Naive thymus-derived CD4-positive, alpha-beta T cell (primary cell): ENCODE measurements at regions of chr20 and their contacts with region 1.

Region 1: DNA sequence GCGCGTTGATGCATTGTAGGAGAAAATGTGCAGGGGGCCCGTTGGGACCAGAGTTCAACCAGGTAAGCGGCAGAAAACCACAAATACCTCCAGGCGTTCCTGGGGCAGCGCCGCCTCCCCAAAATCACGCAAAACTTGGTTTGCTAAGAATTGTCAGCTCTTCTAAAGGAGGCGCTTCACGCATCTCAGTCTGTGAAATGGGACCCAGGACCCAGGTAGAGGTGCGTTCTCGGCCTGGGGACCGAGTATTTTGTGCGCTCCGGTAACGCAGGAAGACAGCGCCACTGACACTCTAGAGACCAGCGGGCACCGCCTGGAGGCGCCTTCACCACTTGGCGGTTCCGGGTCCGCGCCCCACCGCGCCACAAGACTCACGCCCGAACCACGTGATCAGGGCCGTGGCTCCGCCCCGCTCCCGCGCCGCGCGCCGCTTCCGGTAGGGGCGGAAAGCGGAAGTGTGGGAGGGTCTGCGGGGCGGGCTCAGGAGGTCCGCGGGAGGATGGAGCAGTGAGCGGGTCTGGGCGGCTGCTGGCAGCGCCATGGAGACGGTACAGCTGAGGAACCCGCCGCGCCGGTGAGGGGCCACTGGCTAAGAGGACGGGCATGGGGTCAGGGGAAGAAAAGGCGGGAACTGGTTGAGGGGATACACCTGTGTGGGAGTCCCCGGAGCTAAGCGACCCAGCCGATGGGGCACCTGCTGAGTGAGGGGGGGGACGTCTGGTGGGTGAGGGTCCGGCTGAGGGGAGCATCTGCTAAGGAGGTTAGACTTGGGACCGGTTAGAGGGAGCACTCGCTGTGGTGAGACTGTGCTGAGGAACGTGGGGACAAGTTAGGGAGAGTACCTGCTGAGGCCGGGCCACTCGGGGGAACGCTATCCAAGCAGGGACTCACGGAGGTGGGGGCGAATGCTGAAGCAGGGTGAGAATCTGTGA is at the start of gene STK4:
- DNase-seq: peak; percentile 93 to 98 (median 96)
- ATAC-seq: peak; percentile 93
- H3K4me3 ChIP-seq: peak within 1 kb of the TSS; percentile 75
- H3K4me3 Mint-ChIP-seq: peak within 1 kb of the TSS; percentile 93 to 100 (median 95)
- H3K27ac ChIP-seq: peak within 1 kb of the TSS; percentile 91
- H3K27ac Mint-ChIP-seq: peak within 1 kb of the TSS; percentile 80 to 98 (median 90)
- H3K4me1 ChIP-seq: peaks cover 16 to 17% of the 10 kb centered on the region in 2 donors
- H3K4me1 Mint-ChIP-seq: peaks cover 32 to 60% (median 55%) of the 10 kb centered on the region in 7 donors
- H3K27me3 ChIP-seq: no peaks in the 10 kb centered on the region
- H3K27me3 Mint-ChIP-seq: no peaks in the 10 kb centered on the region
- total RNA-seq, gene STK4: 207 to 383 (median 267) TPM

Region 2: DNA sequence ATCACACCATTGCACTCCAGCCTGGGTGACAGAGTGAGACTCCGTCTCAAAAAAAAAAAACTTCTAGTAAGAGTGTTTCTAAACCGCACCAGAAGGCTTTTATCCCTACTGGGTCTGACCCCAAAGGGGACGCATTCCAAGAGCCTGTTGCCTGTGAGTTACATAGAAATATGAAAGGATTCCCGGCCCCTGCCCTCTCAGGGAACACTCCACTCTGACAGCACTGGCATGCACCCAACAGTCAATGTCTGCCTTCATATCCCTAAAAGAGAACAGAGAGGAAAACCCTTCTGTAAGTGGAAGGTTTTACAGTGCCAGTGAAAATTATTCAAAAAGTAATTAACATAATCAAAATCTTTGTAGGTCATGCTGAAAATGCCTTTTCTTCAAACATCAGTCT is 1659.5 kb before region 1 on chr20:
- CTCF ChIA-PET with region 1: no interaction called
- POLR2A ChIA-PET with region 1: no interaction called
- intact Hi-C with region 1: no loop called
- DNase-seq: no peak
- ATAC-seq: no peak
- H3K4me3 ChIP-seq: no peak overlapping the region
- H3K4me3 Mint-ChIP-seq: no peak overlapping the region
- H3K27ac ChIP-seq: no peak overlapping the region
- H3K27ac Mint-ChIP-seq: no peak overlapping the region
- H3K4me1 ChIP-seq: no peaks in the 10 kb centered on the region
- H3K4me1 Mint-ChIP-seq: no peaks in the 10 kb centered on the region
- H3K27me3 ChIP-seq: no peaks in the 10 kb centered on the region
- H3K27me3 Mint-ChIP-seq: peaks cover 0 to 20% (median 15%) of the 10 kb centered on the region in 5 donors

Region 3: GRCh38 chr20:44642203-44643153 is 323.8 kb before region 1 on chr20:
- CTCF ChIA-PET with region 1: no interaction called
- POLR2A ChIA-PET with region 1: no interaction called
- intact Hi-C with region 1: loop called in 1 of 2 experiments (anchors 10 kb)
- DNase-seq: peak in 8 of 9 donors; percentile 28 to 54 (median 41)
- ATAC-seq: peak; percentile 33
- H3K4me3 ChIP-seq: peak overlapping the region; percentile 47
- H3K4me3 Mint-ChIP-seq: peak overlapping the region; percentile 63 to 96 (median 76)
- H3K27ac ChIP-seq: peak overlapping the region; percentile 76
- H3K27ac Mint-ChIP-seq: peak overlapping the region; percentile 90 to 98 (median 96)
- H3K4me1 ChIP-seq: peaks cover 53 to 70% of the 10 kb centered on the region in 2 donors
- H3K4me1 Mint-ChIP-seq: peaks cover 55 to 82% (median 70%) of the 10 kb centered on the region in 7 donors
- H3K27me3 ChIP-seq: no peaks in the 10 kb centered on the region
- H3K27me3 Mint-ChIP-seq: no peaks in the 10 kb centered on the region

Region 4: DNA sequence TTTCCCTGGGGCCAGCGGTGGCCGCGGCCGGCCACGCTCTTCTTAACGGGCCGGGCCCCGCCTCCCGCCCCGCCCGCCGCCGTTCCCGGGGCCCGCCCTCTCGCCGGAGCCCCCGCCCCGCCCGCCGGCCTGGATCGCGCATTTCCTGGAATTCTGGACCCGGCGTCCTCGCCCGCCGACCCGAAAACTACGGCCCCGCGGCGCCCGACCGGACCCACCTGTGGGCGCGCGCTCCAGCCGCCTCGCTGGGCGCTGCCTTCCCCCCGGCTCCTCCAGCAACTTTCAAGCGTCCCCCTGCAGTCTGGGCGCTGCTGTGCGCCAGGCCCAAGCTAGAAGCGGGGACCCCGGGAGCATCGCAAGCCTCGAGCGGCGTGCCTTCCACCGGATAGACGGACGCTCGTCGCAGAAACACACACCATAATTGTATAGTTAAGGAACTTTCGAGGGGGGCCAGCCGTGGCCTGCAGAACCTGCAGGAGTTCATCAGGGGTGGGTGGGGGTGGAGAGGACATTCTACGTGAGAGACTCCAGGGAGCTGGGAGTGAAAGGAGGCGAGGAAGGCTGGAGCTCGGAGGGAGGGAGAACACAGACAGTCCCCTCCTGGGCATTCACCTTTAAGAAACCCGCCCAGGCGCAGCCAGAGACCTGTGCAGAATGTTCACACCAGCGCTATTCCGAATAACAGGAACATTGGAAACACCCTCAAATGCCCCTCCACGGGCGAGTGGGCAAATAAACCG is 314.4 kb before region 1 on chr20 and contains the start of gene ADA:
- CTCF ChIA-PET with region 1: no interaction called
- POLR2A ChIA-PET with region 1: interaction called, 3 read pairs
- intact Hi-C with region 1: loop called (anchors 5 to 10 kb)
- DNase-seq: peak; percentile 26 to 70 (median 48)
- ATAC-seq: peak; percentile 70
- H3K4me3 ChIP-seq: peak within 1 kb of the TSS; percentile 73
- H3K4me3 Mint-ChIP-seq: peak within 1 kb of the TSS; percentile 81 to 96 (median 94)
- H3K27ac ChIP-seq: peak within 1 kb of the TSS; percentile 73
- H3K27ac Mint-ChIP-seq: peak within 1 kb of the TSS; percentile 88 to 98 (median 95)
- H3K4me1 ChIP-seq: peaks cover 38 to 43% of the 10 kb centered on the region in 2 donors
- H3K4me1 Mint-ChIP-seq: peaks cover 40 to 57% (median 55%) of the 10 kb centered on the region in 7 donors
- H3K27me3 ChIP-seq: no peaks in the 10 kb centered on the region
- H3K27me3 Mint-ChIP-seq: no peaks in the 10 kb centered on the region
- total RNA-seq, gene ADA: 26.1 to 103 (median 28.2) TPM

Region 5: GRCh38 chr20:44909872-44910689 is 56.2 kb before region 1 on chr20 and contains the start of gene PABPC1L:
- CTCF ChIA-PET with region 1: no interaction called
- POLR2A ChIA-PET with region 1: no interaction called
- intact Hi-C with region 1: loop called (anchors 1 to 2 kb)
- DNase-seq: peak; percentile 58 to 86 (median 71)
- ATAC-seq: peak; percentile 97
- H3K4me3 ChIP-seq: peak within 1 kb of the TSS; percentile 69
- H3K4me3 Mint-ChIP-seq: peak within 1 kb of the TSS; percentile 75 to 89 (median 85)
- H3K27ac ChIP-seq: peak within 1 kb of the TSS; percentile 53
- H3K27ac Mint-ChIP-seq: peak within 1 kb of the TSS; percentile 46 to 83 (median 78)
- H3K4me1 ChIP-seq: peaks cover 6 to 17% of the 10 kb centered on the region in 2 donors
- H3K4me1 Mint-ChIP-seq: peaks cover 12 to 47% (median 38%) of the 10 kb centered on the region in 7 donors
- H3K27me3 ChIP-seq: no peaks in the 10 kb centered on the region
- H3K27me3 Mint-ChIP-seq: no peaks in the 10 kb centered on the region
- total RNA-seq, gene PABPC1L: 34.0 to 71.7 (median 59.0) TPM

Region 6: GRCh38 chr20:44979090-44979621 is 12.9 kb after region 1 on chr20:
- CTCF ChIA-PET with region 1: interaction called, 28 read pairs
- POLR2A ChIA-PET with region 1: interaction called, 190 read pairs
- intact Hi-C with region 1: loop called (anchors 1 kb)
- DNase-seq: peak in 8 of 9 donors; percentile 60 to 93 (median 86)
- ATAC-seq: peak; percentile 93
- H3K4me3 ChIP-seq: peak overlapping the region; percentile 40
- H3K4me3 Mint-ChIP-seq: peak overlapping the region; percentile 74 to 90 (median 79)
- H3K27ac ChIP-seq: peak overlapping the region; percentile 98
- H3K27ac Mint-ChIP-seq: peak overlapping the region; percentile 86 to 98 (median 97)
- H3K4me1 ChIP-seq: peaks cover 64 to 70% of the 10 kb centered on the region in 2 donors
- H3K4me1 Mint-ChIP-seq: peaks cover 71 to 96% (median 90%) of the 10 kb centered on the region in 7 donors
- H3K27me3 ChIP-seq: no peaks in the 10 kb centered on the region
- H3K27me3 Mint-ChIP-seq: no peaks in the 10 kb centered on the region

Region 7: GRCh38 chr20:44990425-44990824 is 24.1 kb after region 1 on chr20:
- CTCF ChIA-PET with region 1: interaction called, 5 read pairs
- POLR2A ChIA-PET with region 1: interaction called, 15 read pairs
- intact Hi-C with region 1: loop called (anchors 1 kb)
- DNase-seq: peak in 1 of 9 donors; percentile 56
- ATAC-seq: peak; percentile 55
- H3K4me3 ChIP-seq: peak overlapping the region; percentile 42
- H3K4me3 Mint-ChIP-seq: peak overlapping the region; percentile 77 to 95 (median 88)
- H3K27ac ChIP-seq: peak overlapping the region; percentile 76
- H3K27ac Mint-ChIP-seq: peak overlapping the region; percentile 72 to 96 (median 92)
- H3K4me1 ChIP-seq: peaks cover 35 to 66% of the 10 kb centered on the region in 2 donors
- H3K4me1 Mint-ChIP-seq: peaks cover 57 to 97% (median 80%) of the 10 kb centered on the region in 7 donors
- H3K27me3 ChIP-seq: no peaks in the 10 kb centered on the region
- H3K27me3 Mint-ChIP-seq: no peaks in the 10 kb centered on the region

Region 8: DNA sequence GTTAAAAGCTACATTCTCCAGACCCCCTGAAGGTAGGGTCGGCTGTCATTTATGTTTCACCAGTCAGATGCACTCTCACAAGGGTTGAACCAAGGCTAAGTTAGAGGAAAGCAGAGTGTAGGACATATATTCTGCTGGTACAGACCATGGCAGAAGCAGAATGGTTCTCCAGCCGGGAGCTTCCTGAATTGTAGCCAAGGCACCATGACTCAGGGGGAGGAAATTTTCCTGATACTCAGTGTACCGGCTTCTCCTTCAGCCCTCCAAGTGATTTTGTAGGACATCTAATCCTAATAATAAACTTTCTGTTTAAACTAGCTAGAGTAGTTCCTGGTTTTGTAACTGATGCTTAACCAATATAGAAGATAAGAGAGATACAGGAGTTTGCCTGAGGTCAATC is 302.2 kb after region 1 on chr20:
- CTCF ChIA-PET with region 1: no interaction called
- POLR2A ChIA-PET with region 1: no interaction called
- intact Hi-C with region 1: no loop called
- DNase-seq: no peak
- ATAC-seq: no peak
- H3K4me3 ChIP-seq: no peak overlapping the region
- H3K4me3 Mint-ChIP-seq: no peak overlapping the region
- H3K27ac ChIP-seq: no peak overlapping the region
- H3K27ac Mint-ChIP-seq: no peak overlapping the region
- H3K4me1 ChIP-seq: no peaks in the 10 kb centered on the region
- H3K4me1 Mint-ChIP-seq: no peaks in the 10 kb centered on the region
- H3K27me3 ChIP-seq: no peaks in the 10 kb centered on the region
- H3K27me3 Mint-ChIP-seq: peaks cover 25 to 64% (median 41%) of the 10 kb centered on the region in 5 donors

Region 9: DNA sequence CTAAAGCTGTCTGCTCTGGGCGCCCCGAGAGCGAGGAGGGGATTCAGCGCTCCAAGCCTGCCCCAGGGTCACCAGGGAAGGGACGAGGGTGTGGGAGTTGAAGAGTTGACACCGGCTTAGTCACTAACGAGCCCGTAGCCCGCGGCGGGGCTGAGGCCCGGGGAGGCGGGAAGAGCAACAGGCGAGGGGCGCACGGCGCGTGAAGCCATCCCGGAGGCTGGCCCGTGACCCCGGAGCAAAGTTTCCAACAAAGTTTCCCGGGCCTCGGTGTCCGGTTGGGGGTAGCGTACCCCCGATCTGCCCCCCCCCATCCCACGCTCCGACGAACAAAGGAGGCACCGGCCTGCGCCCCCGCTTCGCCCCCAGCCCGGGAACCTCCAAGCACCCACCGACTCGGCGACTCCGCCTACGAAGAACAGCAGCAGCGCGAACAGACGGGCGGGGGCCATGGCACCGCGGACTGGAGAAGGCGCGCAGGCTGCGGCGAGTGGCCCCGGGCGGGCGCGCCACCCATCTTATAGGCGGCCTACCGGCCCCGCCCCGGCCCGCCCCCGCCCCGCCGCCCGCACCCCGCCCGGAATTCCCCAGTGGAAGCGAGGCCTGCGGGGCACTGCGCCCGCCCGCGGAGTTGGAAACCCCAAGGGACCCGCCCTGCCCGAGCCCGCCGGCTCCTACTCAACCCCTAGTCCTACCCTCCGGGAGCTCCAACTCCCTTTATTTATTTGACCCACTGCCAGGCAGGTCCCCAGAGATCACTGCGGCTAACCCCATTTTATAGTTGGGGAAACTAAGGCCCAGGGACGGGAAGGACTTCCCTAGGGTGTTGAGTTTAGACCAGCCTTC is 381.9 kb after region 1 on chr20 and contains the start of gene SDC4:
- CTCF ChIA-PET with region 1: no interaction called
- POLR2A ChIA-PET with region 1: no interaction called
- intact Hi-C with region 1: no loop called
- DNase-seq: peak in 3 of 9 donors; percentile 13 to 85 (median 42)
- ATAC-seq: peak; percentile 87
- H3K4me3 ChIP-seq: peak within 1 kb of the TSS; percentile 54
- H3K4me3 Mint-ChIP-seq: peak within 1 kb of the TSS; percentile 45 to 95 (median 74)
- H3K27ac ChIP-seq: no peak within 1 kb of the TSS
- H3K27ac Mint-ChIP-seq: peak within 1 kb of the TSS in 1 of 9 donors; percentile 83
- H3K4me1 ChIP-seq: peaks cover 4% of the 10 kb centered on the region in 2 donors
- H3K4me1 Mint-ChIP-seq: peaks cover 3 to 51% (median 7%) of the 10 kb centered on the region in 7 donors
- H3K27me3 ChIP-seq: no peaks in the 10 kb centered on the region
- H3K27me3 Mint-ChIP-seq: peaks cover 0 to 18% (median 7%) of the 10 kb centered on the region in 5 donors
- total RNA-seq, gene SDC4: 0.38 to 46.7 (median 0.56) TPM